ENCODE measurements at regions of chr1 and their contacts with region 1.

Region 1: DNA sequence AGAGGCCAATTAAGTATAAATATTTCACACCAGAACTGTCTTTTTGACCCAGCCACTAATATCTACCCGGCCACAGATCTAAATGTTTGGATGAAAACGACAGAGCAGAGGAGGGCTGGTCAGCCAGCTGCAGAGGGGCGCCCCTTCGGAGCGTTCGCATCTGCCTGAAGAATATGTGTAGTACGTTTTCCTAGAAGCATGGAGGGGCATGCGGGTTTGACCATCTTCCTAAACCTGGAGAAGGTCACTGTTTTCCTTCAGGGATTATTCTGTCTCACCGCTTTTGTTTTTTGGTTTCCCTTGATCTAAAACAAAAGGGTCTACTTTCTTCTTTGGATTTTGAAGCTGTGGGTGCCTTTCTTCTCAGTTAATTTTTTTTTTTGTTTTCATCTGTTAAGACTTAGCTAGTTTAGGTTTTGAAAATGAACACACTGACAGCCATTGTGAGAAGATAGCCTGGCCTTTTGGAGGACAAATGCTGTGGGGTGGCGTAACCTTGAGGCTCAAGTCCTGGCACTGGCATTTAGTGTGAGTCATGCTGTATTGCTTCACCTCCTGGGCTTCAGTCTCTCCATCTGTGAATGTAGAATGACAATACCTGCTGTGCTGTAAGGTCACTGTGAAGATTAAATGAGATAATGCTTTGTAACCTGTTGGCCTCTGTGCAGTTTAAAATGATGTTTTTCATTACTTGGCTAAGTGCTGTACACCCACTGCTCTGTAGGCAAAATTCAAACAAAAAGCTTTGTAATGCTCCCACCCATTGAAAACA is 74.1 kb upstream of the IRF2BP2 start:
- DNase-seq: peak; percentile 89

Region 2: DNA sequence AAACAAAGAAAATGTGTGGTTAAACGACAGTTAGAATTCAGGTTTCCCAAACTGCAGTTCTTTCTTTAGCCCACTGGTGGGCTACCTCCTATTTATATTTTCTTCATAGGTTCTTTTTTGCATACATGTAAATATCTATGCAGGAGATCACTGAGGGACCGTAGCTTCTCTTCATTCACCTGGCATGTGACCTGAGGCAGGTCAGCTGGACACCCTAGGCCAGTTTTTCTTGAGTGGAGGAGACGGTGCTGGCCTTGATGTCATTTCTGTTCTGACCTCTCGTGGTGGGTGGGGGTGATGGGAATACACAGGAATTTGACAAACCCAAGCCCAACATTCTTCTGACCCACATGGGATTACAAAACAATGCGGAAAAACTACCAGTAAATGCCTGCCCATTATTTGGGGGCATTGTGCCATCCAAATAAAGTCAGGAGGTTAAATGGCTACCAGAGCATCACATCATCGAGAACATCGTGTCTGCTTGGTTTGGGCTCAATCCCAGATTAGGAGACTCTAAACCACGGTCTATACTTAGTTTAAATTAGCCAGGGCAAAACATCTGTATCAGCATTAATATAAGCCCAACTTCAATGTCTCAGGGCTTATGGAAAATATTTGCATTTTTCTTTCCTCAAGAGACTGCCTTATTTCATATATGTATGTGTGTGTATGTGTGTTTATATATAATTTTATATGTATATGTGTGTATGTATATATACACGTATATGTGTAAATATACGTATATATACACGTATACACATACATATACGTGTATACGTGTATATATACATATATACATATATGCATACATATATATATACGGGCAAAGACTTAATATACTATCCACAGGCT is 66.7 kb before region 1 on chr1:
- intact Hi-C with region 1: loop called (anchors 5 kb)
- DNase-seq: no peak

Region 3: GRCh38 chr1:234778221-234779159 is 94.4 kb after region 1 on chr1:
- intact Hi-C with region 1: no loop called
- DNase-seq: no peak